ENCODE measurements at regions of chr6 and their contacts with region 1.

Region 1: DNA sequence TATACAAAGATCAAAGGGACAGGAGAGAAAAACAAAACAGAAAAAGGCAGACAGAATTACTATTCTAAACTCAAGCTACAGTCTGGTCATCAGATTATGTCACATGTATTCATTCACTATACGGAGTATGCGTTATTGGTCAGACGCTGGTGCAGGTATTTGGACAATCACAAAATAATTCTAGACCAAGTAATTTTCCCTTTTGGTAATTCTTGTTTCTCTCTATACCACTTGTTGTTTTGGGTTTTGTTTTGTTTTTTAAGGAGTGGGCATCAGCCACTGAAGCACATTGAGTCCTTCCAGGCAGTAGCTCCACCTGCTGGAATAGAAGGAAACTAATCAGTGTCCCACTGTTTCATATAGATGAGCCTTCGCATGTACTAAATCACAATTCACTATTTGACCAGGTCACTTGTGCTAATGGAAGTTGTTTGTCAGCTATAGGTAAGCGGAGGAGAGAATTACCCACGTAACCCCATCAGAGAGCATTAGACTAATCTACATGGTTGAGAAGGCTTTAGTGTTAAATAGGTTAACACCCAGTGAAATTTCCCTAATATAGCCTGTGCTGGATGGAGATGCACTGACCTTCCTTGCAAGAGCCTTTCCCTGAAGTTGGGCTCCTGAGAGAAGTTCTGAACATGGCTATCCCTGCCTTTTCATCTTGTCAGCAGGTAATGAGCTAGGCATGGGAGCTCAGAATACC is 77.9 kb downstream of the TNFAIP3 start:
- DNase-seq: peak; percentile 54
- H3K4me3 Mint-ChIP-seq: no peak overlapping the region
- H3K27ac Mint-ChIP-seq: no peak overlapping the region
- H3K4me1 Mint-ChIP-seq: peaks cover 30% of the 10 kb centered on the region
- H3K27me3 Mint-ChIP-seq: no peaks in the 10 kb centered on the region

Region 2: GRCh38 chr6:137646484-137646883 is 298.5 kb before region 1 on chr6:
- CTCF ChIA-PET with region 1: no interaction called
- POLR2A ChIA-PET with region 1: no interaction called
- DNase-seq: no peak
- H3K4me3 Mint-ChIP-seq: no peak overlapping the region
- H3K27ac Mint-ChIP-seq: no peak overlapping the region
- H3K4me1 Mint-ChIP-seq: no peaks in the 10 kb centered on the region
- H3K27me3 Mint-ChIP-seq: peaks cover 22% of the 10 kb centered on the region

Region 3: DNA sequence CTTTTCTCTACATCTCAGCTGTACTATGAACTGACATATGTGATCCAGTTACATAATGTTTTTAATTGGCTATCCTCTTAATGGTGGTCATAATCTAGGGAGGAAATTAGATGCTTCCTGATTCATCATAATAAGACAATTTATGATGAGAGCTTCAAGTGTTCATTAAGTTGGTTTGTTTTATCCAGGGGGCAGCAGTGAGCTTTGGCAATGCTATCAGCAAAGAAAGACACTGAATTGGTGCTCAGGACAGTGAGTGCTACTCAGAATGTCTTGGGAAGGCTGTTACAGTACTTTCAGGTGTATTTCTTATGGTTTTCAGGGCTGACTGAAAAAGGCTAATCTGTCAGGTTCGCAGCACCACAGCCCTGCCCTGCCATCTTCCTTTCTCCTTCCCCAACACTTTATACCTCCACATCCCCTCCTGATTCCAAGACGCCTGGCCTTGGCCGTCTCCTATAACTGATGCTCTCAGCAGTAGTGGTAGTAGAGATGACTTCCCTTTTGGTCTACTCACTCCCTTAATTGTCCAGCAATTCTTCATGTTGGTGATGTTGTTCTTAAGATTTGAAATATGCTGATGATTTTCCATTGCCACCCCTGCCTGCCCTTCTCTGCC is 144.9 kb before region 1 on chr6:
- CTCF ChIA-PET with region 1: interaction called, 11 read pairs
- POLR2A ChIA-PET with region 1: no interaction called
- DNase-seq: peak; percentile 75
- H3K4me3 Mint-ChIP-seq: no peak overlapping the region
- H3K27ac Mint-ChIP-seq: peak overlapping the region; percentile 46
- H3K4me1 Mint-ChIP-seq: peaks cover 65% of the 10 kb centered on the region
- H3K27me3 Mint-ChIP-seq: no peaks in the 10 kb centered on the region

Region 4: GRCh38 chr6:137878486-137879285 is 66.3 kb before region 1 on chr6:
- CTCF ChIA-PET with region 1: interaction called, 12 read pairs
- POLR2A ChIA-PET with region 1: no interaction called
- DNase-seq: no peak
- H3K4me3 Mint-ChIP-seq: no peak overlapping the region
- H3K27ac Mint-ChIP-seq: peak overlapping the region; percentile 25
- H3K4me1 Mint-ChIP-seq: peaks cover 81% of the 10 kb centered on the region
- H3K27me3 Mint-ChIP-seq: no peaks in the 10 kb centered on the region

Region 5: DNA sequence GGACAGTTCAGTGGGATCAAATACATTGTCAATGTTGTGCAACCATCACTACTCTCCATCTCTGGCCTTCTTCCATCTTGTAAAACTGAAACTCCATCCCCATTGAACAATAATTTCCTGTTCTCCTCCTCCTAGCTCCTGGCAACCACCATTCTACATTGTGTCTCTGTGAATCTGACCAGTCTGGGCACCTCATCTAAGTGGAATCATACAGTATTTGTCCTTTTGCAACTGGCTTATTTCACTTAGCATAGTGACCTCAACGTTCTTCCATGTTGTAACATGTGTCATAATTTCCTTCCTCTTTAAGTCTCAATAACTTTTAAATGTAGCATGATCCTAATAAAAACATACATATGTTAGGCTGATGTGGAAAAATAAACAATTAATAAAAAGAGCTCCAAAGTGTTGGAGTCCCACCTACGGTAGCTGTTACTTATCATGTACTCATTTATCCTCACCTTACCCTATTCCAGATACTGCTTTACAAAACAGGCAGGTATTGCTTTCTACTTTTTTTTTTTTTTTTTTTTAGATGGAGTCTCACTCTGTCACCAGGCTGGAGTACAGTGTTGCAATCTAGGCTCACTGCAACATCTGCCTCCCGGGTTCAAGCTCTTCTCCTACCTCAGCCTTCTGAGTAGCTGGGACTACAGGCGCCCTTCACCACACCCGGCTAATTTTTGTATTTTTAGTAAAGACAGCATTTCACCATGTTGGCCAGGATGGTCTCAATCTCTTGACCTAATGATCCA is 14.0 kb after region 1 on chr6:
- CTCF ChIA-PET with region 1: interaction called, 31 read pairs
- POLR2A ChIA-PET with region 1: no interaction called
- DNase-seq: no peak
- H3K4me3 Mint-ChIP-seq: no peak overlapping the region
- H3K27ac Mint-ChIP-seq: no peak overlapping the region
- H3K4me1 Mint-ChIP-seq: peaks cover 15% of the 10 kb centered on the region
- H3K27me3 Mint-ChIP-seq: no peaks in the 10 kb centered on the region

Region 6: DNA sequence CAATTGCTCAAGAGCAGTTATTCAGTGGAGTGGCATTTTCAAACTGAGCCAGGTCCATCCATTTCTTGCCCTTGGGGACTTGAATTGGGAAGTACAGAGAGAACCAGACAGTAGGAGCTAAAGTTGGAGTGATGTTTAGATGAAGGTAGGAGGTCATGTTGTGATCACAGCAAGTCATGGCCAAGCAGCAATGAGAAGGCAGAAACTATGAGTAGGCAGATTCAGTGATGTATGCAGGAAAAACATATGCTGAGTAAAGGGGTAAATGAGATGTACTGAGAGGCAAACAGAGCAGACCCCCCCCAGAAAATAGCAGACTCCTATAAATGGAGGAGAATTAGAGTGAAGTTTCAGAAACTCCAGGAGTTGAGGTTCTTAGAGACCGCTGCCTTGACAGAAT is 66.5 kb after region 1 on chr6:
- CTCF ChIA-PET with region 1: no interaction called
- POLR2A ChIA-PET with region 1: no interaction called
- DNase-seq: no peak
- H3K4me3 Mint-ChIP-seq: no peak overlapping the region
- H3K27ac Mint-ChIP-seq: no peak overlapping the region
- H3K4me1 Mint-ChIP-seq: peaks cover 1% of the 10 kb centered on the region
- H3K27me3 Mint-ChIP-seq: peaks cover 2% of the 10 kb centered on the region